Breast epithelium (tissue), 4 donors: ENCODE measurements at regions of chr1 and their contacts with region 1.

Region 1: DNA sequence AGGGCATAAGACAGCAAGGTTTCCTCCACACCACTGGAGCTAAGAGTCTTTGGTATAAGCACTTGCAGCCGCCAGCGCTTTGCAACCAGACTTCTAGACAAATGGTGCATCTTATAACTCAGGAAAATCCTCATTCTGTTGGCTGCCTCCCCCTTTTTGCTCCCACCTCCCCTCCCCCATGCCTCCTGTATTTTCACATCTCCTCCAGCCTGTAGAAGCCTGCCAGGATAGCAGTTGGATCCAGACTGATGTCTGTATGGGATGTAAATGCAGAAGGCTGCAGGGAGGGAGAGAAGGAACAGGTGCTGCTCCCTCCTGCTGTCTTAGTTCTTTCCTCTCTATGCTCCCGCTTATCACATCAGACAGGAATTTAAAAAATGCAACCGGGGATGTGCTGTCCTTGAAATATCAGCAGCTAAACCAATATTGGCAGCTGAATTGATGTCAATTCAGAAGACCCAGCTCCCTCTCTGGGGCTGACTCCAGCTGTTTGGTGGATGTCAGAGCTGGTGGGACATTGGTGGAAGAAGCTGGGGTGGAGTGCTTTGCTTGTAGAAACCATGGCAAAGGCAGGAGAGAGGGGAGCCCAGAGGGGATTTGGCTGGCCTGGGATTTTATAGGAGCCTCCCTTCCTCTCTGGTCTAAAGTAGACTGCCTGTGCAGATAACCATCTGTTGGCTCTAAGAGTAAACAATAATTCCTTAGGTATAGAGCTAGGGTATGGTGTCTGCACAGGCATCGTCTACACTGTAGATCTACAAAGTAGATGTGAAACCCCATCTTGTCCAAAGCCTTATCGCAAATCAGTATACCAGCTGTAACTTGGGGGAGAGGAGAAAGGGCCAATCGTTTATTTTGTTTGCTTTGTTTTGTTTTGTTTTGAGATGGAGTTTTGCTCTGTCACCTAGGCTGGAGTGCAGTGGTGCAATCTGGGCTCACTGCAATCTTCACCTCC is 53.6 kb downstream of the NFASC start:
- DNase-seq: no peak
- H3K4me3 ChIP-seq: no peak overlapping the region
- H3K27ac ChIP-seq: no peak overlapping the region
- H3K4me1 ChIP-seq: no peaks in the 10 kb centered on the region
- H3K27me3 ChIP-seq: no peaks in the 10 kb centered on the region
- CTCF ChIP-seq: no peak
- POLR2A ChIP-seq: no peak

Region 2: DNA sequence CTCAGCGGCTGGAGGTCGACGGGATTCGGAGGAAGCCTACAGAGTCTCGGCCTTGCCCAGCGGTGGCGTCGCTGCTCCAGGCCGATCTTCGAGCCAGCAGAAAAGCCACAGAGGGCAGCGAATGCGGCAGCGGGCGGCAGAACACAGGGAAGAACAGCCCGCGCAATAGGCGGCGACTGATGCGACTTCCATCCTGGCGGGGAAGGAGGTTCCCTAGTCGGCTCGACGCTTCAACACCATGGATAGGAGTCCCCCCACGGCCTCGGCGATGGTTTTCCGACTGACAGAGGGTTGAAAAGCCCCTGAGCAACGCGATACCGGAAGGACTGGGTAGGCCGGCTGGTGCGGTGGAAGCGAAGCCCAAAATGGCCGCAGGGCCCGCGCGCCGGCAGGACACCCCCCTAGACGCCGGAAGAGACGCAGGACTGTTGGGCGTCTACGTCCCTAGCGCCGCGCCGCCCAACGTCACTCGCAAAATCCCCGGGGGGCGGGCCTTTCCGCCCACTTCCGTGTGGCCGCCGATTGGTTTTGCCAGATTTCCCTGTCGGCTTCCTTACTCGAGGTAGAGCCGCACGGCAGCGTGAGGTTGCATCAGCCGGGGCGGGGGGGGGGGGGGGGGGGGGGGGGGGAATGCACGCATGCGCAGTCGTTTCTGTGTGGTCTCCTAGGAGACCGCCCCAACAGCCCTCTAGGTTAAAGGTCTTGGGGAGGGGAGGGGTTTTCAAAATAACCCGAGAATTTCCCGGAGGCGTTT is 512.7 kb before region 1 on chr1 and contains the start of gene PPP1R15B:
- intact Hi-C with region 1: loop called (anchors 10 kb)
- DNase-seq: peak; percentile 97
- H3K4me3 ChIP-seq: peak within 1 kb of the TSS; percentile 95 to 99 (median 95)
- H3K27ac ChIP-seq: peak within 1 kb of the TSS; percentile 99 to 100
- H3K4me1 ChIP-seq: no peaks in the 10 kb centered on the region
- H3K27me3 ChIP-seq: no peaks in the 10 kb centered on the region
- CTCF ChIP-seq: no peak
- POLR2A ChIP-seq: peak; percentile 94
- total RNA-seq, gene PPP1R15B: 47.5 to 91.6 (median 53.3) TPM

Region 3: DNA sequence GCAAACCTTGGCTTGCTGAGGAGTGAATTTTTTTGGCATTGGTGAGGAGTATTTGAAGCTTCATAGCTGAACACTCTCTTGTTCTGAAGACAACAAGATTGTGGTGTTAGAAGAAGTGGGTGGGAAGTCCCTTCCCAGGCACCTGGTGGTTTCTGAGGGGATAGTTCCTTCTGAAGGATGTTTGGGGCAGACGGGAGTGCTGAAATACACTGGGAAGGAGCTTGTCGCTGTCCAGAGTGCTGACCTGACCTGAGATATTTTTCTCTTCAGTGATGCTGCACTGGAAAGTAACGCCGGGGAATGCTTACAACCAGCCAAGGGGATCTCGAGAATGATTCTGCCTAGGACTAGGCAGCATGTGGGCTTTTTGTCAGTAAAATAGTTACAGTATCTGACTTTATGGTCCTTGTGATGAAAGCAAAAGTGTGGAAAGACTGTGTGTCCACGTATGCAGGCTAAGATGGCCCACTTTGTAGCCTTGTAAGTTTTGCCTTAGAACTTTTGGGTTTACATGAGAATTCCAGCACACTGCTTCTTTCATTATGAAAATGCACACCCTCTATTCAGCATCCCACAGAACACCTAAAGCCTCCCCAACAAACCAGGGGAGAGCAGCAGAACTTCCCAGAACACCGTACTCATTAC is 86.7 kb before region 1 on chr1:
- intact Hi-C with region 1: no loop called
- DNase-seq: no peak
- H3K4me3 ChIP-seq: no peak overlapping the region
- H3K27ac ChIP-seq: no peak overlapping the region
- H3K4me1 ChIP-seq: no peaks in the 10 kb centered on the region
- H3K27me3 ChIP-seq: no peaks in the 10 kb centered on the region
- CTCF ChIP-seq: no peak
- POLR2A ChIP-seq: no peak